ENCODE measurements at regions of chr3 and their contacts with region 1.

Region 1: GRCh38 chr3:27467545-27467944 is 16.6 kb downstream of the SLC4A7 start:
- DNase-seq: peak in 7 of 9 donors; percentile 13 to 57 (median 38)
- ATAC-seq: peak; percentile 95
- H3K4me3 ChIP-seq: no peak overlapping the region
- H3K4me3 Mint-ChIP-seq: peak overlapping the region in 5 of 10 donors; percentile 4 to 42 (median 36)
- H3K27ac ChIP-seq: no peak overlapping the region
- H3K27ac Mint-ChIP-seq: peak overlapping the region in 5 of 9 donors; percentile 1 to 61 (median 26)
- H3K4me1 ChIP-seq: no peaks in the 10 kb centered on the region
- H3K4me1 Mint-ChIP-seq: peaks cover 6 to 38% (median 27%) of the 10 kb centered on the region in 7 donors
- H3K27me3 ChIP-seq: no peaks in the 10 kb centered on the region
- H3K27me3 Mint-ChIP-seq: no peaks in the 10 kb centered on the region

Region 2: GRCh38 chr3:27134165-27134796 is 333.3 kb before region 1 on chr3:
- CTCF ChIA-PET with region 1: interaction called, 3 read pairs
- POLR2A ChIA-PET with region 1: no interaction called
- intact Hi-C with region 1: loop called (anchors 1 kb)
- DNase-seq: peak; percentile 9 to 56 (median 43)
- ATAC-seq: peak; percentile 83
- H3K4me3 ChIP-seq: no peak overlapping the region
- H3K4me3 Mint-ChIP-seq: no peak overlapping the region
- H3K27ac ChIP-seq: no peak overlapping the region
- H3K27ac Mint-ChIP-seq: no peak overlapping the region
- H3K4me1 ChIP-seq: no peaks in the 10 kb centered on the region
- H3K4me1 Mint-ChIP-seq: no peaks in the 10 kb centered on the region
- H3K27me3 ChIP-seq: peaks cover 0 to 3% of the 10 kb centered on the region in 2 donors
- H3K27me3 Mint-ChIP-seq: peaks cover 0 to 11% (median 0%) of the 10 kb centered on the region in 5 donors

Region 3: DNA sequence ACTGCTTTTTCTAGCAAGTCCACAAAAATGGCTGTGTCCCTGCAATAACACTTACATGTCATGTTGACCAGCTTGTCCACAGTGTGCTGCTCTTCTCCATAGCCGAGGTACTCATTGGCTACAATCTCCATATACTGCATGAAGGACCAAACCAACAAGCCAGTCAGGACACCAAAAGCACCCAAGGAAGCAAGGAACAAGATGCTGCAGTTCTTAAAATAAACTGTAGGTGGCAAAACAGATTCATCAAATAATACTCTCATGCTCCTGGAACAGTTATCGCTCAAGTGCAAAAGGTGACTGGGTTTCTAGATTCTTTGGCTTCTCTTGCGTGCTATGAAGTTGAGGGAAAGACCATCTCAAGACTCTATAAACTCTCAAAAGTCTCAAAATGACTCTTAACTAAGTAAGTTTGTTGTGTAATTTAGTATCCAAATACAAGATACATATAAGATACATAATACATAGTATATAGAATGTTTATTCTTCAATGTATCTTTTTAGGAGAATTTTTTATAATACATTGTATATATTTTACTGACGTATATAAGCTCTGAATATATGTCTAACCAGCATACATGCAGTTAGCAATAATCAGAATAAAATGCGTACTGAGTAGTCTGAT is 155.4 kb before region 1 on chr3:
- CTCF ChIA-PET with region 1: interaction called, 4 read pairs
- POLR2A ChIA-PET with region 1: no interaction called
- intact Hi-C with region 1: loop called (anchors 1 kb)
- DNase-seq: peak in 7 of 9 donors; percentile 18 to 61 (median 44)
- ATAC-seq: peak; percentile 70
- H3K4me3 ChIP-seq: no peak overlapping the region
- H3K4me3 Mint-ChIP-seq: no peak overlapping the region
- H3K27ac ChIP-seq: no peak overlapping the region
- H3K27ac Mint-ChIP-seq: no peak overlapping the region
- H3K4me1 ChIP-seq: no peaks in the 10 kb centered on the region
- H3K4me1 Mint-ChIP-seq: peaks cover 0 to 4% (median 0%) of the 10 kb centered on the region in 7 donors
- H3K27me3 ChIP-seq: no peaks in the 10 kb centered on the region
- H3K27me3 Mint-ChIP-seq: peaks cover 0 to 20% (median 8%) of the 10 kb centered on the region in 5 donors

Region 4: DNA sequence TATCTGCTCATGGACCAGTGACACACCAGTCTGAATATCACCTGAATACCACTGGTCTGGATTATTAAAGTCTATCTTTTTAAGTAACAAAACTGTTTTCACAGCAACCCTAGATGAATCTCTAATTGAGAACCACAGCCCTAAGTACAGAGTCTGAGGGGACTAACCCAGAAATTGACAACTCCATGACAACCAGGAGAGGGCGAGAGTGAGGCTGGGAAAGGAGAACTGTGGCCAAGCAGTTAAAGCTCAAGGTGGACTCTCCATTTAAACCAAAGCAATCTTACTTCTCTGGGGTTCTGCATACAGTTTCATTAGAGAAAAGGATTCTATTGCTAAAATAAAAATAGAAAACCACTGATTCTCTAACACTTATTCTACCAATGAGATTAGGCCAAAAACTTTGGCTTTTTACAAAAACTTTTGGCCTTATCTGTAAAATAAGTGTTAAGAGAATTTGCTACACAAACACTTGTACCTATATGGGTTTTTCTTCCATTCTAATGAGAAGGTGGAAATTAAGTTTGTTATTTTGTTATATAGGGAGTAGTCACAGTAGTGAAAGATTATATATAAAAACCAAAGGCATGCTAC is 109.8 kb before region 1 on chr3:
- CTCF ChIA-PET with region 1: interaction called, 11 read pairs
- POLR2A ChIA-PET with region 1: no interaction called
- intact Hi-C with region 1: loop called (anchors 1 kb)
- DNase-seq: peak in 8 of 9 donors; percentile 19 to 56 (median 41)
- ATAC-seq: peak; percentile 93
- H3K4me3 ChIP-seq: no peak overlapping the region
- H3K4me3 Mint-ChIP-seq: no peak overlapping the region
- H3K27ac ChIP-seq: no peak overlapping the region
- H3K27ac Mint-ChIP-seq: no peak overlapping the region
- H3K4me1 ChIP-seq: peaks cover 13 to 18% of the 10 kb centered on the region in 2 donors
- H3K4me1 Mint-ChIP-seq: peaks cover 0 to 31% (median 25%) of the 10 kb centered on the region in 7 donors
- H3K27me3 ChIP-seq: no peaks in the 10 kb centered on the region
- H3K27me3 Mint-ChIP-seq: peaks cover 0 to 20% (median 0%) of the 10 kb centered on the region in 5 donors

Region 5: GRCh38 chr3:27415202-27415601 is 52.3 kb before region 1 on chr3:
- CTCF ChIA-PET with region 1: interaction called, 3 read pairs
- POLR2A ChIA-PET with region 1: no interaction called
- intact Hi-C with region 1: loop called in 1 of 2 experiments (anchors 2 kb)
- DNase-seq: no peak
- ATAC-seq: no peak
- H3K4me3 ChIP-seq: no peak overlapping the region
- H3K4me3 Mint-ChIP-seq: no peak overlapping the region
- H3K27ac ChIP-seq: no peak overlapping the region
- H3K27ac Mint-ChIP-seq: no peak overlapping the region
- H3K4me1 ChIP-seq: no peaks in the 10 kb centered on the region
- H3K4me1 Mint-ChIP-seq: peaks cover 0 to 7% (median 5%) of the 10 kb centered on the region in 7 donors
- H3K27me3 ChIP-seq: no peaks in the 10 kb centered on the region
- H3K27me3 Mint-ChIP-seq: no peaks in the 10 kb centered on the region

Region 6: GRCh38 chr3:27454914-27455313 is 12.6 kb before region 1 on chr3:
- CTCF ChIA-PET with region 1: interaction called, 7 read pairs
- POLR2A ChIA-PET with region 1: interaction called, 3 read pairs
- intact Hi-C with region 1: loop called in 1 of 2 experiments (anchors 1 kb)
- DNase-seq: peak in 1 of 9 donors; percentile 11
- ATAC-seq: no peak
- H3K4me3 ChIP-seq: no peak overlapping the region
- H3K4me3 Mint-ChIP-seq: peak overlapping the region in 3 of 10 donors; percentile 12 to 37 (median 20)
- H3K27ac ChIP-seq: no peak overlapping the region
- H3K27ac Mint-ChIP-seq: peak overlapping the region in 2 of 9 donors; percentile 26 to 41
- H3K4me1 ChIP-seq: peaks cover 7 to 13% of the 10 kb centered on the region in 2 donors
- H3K4me1 Mint-ChIP-seq: peaks cover 24 to 72% (median 63%) of the 10 kb centered on the region in 7 donors
- H3K27me3 ChIP-seq: no peaks in the 10 kb centered on the region
- H3K27me3 Mint-ChIP-seq: no peaks in the 10 kb centered on the region

Region 7: DNA sequence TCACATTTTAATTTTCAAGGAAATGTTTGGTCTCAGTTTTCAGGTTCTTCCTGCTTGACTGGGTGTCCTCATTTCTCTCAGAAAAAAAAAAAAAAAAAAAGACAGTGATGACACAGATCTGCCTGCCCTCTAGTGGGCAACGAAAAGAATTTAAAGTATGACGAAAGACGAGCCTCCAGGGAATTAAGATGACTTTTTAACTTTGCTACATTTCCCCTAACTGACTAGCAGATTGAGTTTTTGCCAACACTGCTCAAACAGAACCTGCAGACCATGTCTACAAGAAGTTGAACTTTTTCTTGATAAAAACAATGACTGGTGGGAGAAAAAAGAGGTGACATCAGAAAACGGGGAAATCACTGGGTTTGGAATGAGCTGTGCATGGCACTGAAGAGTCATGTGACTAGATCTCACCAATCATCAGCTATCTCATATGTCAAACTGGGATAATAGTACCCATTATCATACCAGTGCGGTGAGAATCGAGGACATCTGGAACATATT is 213.8 kb after region 1 on chr3:
- CTCF ChIA-PET with region 1: interaction called, 6 read pairs
- POLR2A ChIA-PET with region 1: no interaction called
- intact Hi-C with region 1: loop called (anchors 1 to 2 kb)
- DNase-seq: peak in 7 of 9 donors; percentile 23 to 74 (median 64)
- ATAC-seq: peak; percentile 89
- H3K4me3 ChIP-seq: no peak overlapping the region
- H3K4me3 Mint-ChIP-seq: peak overlapping the region in 9 of 10 donors; percentile 25 to 83 (median 66)
- H3K27ac ChIP-seq: no peak overlapping the region
- H3K27ac Mint-ChIP-seq: peak overlapping the region in 5 of 9 donors; percentile 3 to 77 (median 53)
- H3K4me1 ChIP-seq: no peaks in the 10 kb centered on the region
- H3K4me1 Mint-ChIP-seq: peaks cover 6 to 15% (median 10%) of the 10 kb centered on the region in 7 donors
- H3K27me3 ChIP-seq: no peaks in the 10 kb centered on the region
- H3K27me3 Mint-ChIP-seq: peaks cover 0 to 21% (median 4%) of the 10 kb centered on the region in 5 donors